HCT116 (cell line): ENCODE measurements at regions of chr7 and their contacts with region 1.

Region 1: GRCh38 chr7:128841921-128842651 is 11.9 kb downstream of the FLNC start:
- DNase-seq: no peak
- ATAC-seq: peak; percentile 83
- H3K4me3 ChIP-seq: no peak overlapping the region
- H3K27ac ChIP-seq: no peak overlapping the region
- H3K4me1 ChIP-seq: peaks cover 0 to 8% of the 10 kb centered on the region in 2 experiments; a peak in 2 of 4 replicates
- H3K27me3 ChIP-seq: no peaks in the 10 kb centered on the region
- CTCF ChIP-seq: peak; percentile 63 to 84 (median 65)
- POLR2A ChIP-seq: no peak
- RAD21 ChIP-seq: no peak; the same call in 1 of the 2 replicates

Region 2: DNA sequence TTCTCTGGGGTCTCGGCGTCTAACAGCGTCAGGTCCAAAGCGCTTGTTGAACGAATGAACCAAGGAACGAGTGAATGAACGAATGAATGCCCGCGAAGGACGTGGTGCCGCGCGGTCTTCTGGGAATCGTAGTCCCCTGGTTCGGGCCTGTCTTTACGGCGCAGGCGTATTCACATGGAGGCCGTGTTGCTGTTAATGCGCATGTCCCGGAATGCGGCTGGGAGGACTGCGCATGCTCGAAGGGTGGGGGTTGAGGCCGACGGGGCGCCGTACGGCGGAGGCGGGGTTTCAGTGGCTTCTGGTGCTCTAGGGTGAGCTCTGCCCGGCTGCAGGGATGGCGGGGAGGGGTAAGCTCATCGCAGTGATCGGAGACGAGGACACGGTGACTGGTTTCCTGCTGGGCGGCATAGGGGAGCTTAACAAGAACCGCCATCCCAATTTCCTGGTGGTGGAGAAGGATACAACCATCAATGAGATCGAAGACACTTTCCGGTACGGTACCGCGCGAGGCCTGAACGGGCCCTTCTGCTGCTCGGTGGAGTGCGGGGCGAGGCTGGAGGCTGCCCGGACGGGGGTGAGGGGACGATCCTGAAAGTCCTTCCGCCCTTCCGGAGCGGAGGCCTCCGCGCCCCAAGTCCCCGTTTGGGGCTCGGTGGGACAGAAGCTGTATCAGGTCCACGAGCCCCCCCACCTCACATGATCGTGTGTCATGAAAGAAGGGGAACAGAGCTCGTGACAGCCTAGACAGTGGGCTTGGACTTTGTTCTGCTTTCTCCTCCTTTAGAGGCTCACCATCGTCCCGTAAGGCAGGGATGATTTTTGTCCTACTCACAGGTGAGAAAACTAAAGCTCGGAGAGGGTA is 20.7 kb after region 1 on chr7 and contains the start of gene ATP6V1F:
- CTCF ChIA-PET with region 1: interaction called, 12 read pairs
- POLR2A ChIA-PET with region 1: no interaction called
- RAD21 ChIA-PET with region 1: no interaction called
- intact Hi-C with region 1: no loop called
- DNase-seq: peak; percentile 95
- ATAC-seq: peak; percentile 88
- H3K4me3 ChIP-seq: peak within 1 kb of the TSS; percentile 79 to 96
- H3K27ac ChIP-seq: peak within 1 kb of the TSS; percentile 53
- H3K4me1 ChIP-seq: peaks cover 10 to 20% of the 10 kb centered on the region in 2 experiments; a peak in 3 of 4 replicates
- H3K27me3 ChIP-seq: no peaks in the 10 kb centered on the region
- CTCF ChIP-seq: no peak
- POLR2A ChIP-seq: peak; percentile 71
- RAD21 ChIP-seq: no peak
- total RNA-seq, gene ATP6V1F: 149 TPM

Region 3: GRCh38 chr7:128974241-128974934 is 132.3 kb after region 1 on chr7:
- CTCF ChIA-PET with region 1: no interaction called
- POLR2A ChIA-PET with region 1: no interaction called
- RAD21 ChIA-PET with region 1: no interaction called
- intact Hi-C with region 1: no loop called
- DNase-seq: no peak
- ATAC-seq: no peak
- H3K4me3 ChIP-seq: no peak overlapping the region
- H3K27ac ChIP-seq: no peak overlapping the region
- H3K4me1 ChIP-seq: no peaks in the 10 kb centered on the region
- H3K27me3 ChIP-seq: no peaks in the 10 kb centered on the region
- CTCF ChIP-seq: no peak
- POLR2A ChIP-seq: no peak
- RAD21 ChIP-seq: no peak